ENCODE measurements at regions of chr15 and their contacts with region 1.

Region 1: GRCh38 chr15:82832601-82833361 is 23.4 kb downstream of the WHAMM start:
- DNase-seq: peak; percentile 51 to 87
- H3K4me3 ChIP-seq: no peak overlapping the region
- H3K27ac ChIP-seq: peak overlapping the region; percentile 65
- H3K4me1 ChIP-seq: peaks cover 22% of the 10 kb centered on the region
- H3K27me3 ChIP-seq: no peaks in the 10 kb centered on the region
- CTCF ChIP-seq: no peak; the same call in 1 of the 2 replicates

Region 2: GRCh38 chr15:82726816-82727215 is 106.0 kb before region 1 on chr15:
- CTCF ChIA-PET with region 1: no interaction called
- POLR2A ChIA-PET with region 1: no interaction called
- intact Hi-C with region 1: no loop called
- DNase-seq: no peak
- H3K4me3 ChIP-seq: no peak overlapping the region
- H3K27ac ChIP-seq: no peak overlapping the region
- H3K4me1 ChIP-seq: no peaks in the 10 kb centered on the region
- H3K27me3 ChIP-seq: peaks cover 8% of the 10 kb centered on the region
- CTCF ChIP-seq: no peak

Region 3: DNA sequence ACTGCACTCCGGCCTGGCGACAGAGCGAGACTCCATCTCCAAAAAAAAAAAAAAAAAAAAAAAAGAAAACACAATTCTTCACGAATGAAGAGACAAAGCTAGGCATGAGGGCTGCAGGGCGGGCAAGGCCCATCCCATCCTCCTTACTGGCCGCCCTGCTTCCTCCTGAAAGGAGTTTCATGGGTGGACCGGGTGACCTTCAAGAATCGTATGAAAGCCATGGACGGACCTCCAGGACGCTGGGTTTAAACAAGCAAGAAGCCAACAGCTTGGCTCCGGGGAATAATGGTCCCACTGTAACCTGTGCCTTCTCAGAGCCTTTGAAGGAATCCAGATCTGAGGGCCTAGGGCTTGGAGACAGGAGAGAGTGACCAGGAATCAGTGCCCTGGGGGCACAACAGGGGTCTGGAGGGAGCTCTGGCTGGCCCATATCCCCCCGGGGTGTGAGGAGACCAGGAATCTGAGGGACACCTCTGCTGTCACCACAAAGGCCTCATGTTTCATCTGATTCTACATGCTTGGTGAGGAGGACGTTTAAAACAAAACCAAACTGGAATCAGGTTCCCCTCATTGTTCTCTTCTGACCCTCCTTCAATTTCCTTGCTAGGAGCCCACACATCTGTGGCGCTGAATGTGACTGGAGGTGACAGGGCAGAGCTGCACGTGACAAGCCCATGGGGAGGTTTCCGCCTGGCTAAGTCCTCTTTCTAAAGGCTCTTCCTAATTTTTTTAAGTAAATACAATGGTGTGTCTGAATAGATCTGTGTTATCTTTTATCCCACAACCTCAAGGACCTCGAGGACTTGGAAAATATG is 22.7 kb after region 1 on chr15:
- CTCF ChIA-PET with region 1: interaction called, 12 read pairs
- POLR2A ChIA-PET with region 1: no interaction called
- intact Hi-C with region 1: no loop called
- DNase-seq: no peak
- H3K4me3 ChIP-seq: no peak overlapping the region
- H3K27ac ChIP-seq: no peak overlapping the region
- H3K4me1 ChIP-seq: no peaks in the 10 kb centered on the region
- H3K27me3 ChIP-seq: no peaks in the 10 kb centered on the region
- CTCF ChIP-seq: no peak

Region 4: DNA sequence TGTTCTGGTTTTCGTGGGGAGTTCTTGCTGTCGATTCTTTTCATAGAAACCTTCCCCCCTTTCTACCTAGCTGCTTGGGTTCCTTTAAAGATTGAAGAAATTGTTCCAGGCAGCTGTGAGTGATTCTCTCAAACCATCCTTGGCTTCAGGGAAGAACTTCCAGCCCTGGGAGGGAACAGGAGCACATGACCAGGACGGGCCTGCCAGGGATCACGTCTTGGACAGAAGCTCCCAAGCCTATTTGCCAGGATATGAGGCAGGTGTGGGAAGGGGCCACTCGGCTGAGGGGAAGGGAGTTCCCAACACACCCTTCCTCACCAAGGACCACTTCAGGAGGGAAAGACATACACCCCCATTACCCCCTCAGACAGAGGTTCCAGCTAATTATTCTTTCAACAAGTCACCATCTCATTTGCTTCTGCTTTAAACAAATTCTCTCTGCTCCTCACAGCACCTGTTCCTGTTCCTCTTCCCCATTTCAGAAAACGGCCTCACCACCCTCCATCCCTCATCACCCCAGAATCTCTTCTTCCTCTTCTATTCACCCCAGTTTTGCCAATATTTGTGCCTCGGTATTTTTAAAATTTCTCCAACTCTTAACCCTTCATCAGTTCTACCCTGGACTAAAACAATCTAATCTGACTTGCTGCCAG is 39.2 kb after region 1 on chr15:
- CTCF ChIA-PET with region 1: no interaction called
- POLR2A ChIA-PET with region 1: interaction called, 10 read pairs
- intact Hi-C with region 1: no loop called
- DNase-seq: no peak
- H3K4me3 ChIP-seq: no peak overlapping the region
- H3K27ac ChIP-seq: no peak overlapping the region
- H3K4me1 ChIP-seq: no peaks in the 10 kb centered on the region
- H3K27me3 ChIP-seq: no peaks in the 10 kb centered on the region; the same call in 1 of the 2 replicates
- CTCF ChIP-seq: no peak

Region 5: GRCh38 chr15:83327041-83327440 is 494.3 kb after region 1 on chr15:
- CTCF ChIA-PET with region 1: no interaction called
- POLR2A ChIA-PET with region 1: interaction called, 14 read pairs
- intact Hi-C with region 1: no loop called
- DNase-seq: no peak
- H3K4me3 ChIP-seq: no peak overlapping the region
- H3K27ac ChIP-seq: no peak overlapping the region
- H3K4me1 ChIP-seq: no peaks in the 10 kb centered on the region
- H3K27me3 ChIP-seq: no peaks in the 10 kb centered on the region
- CTCF ChIP-seq: no peak